ENCODE measurements at regions of chr6 and their contacts with region 1.

Region 1: GRCh38 chr6:83514866-83515466 is 2.6 kb downstream of the PRSS35 start:
- DNase-seq: peak; percentile 63
- H3K4me3 ChIP-seq: no peak overlapping the region
- H3K27ac ChIP-seq: no peak overlapping the region
- H3K27me3 ChIP-seq: no peaks in the 10 kb centered on the region
- CTCF ChIP-seq: peak; percentile 90

Region 2: GRCh38 chr6:83199863-83200225 is 315.1 kb before region 1 on chr6:
- CTCF ChIA-PET with region 1: interaction called, 10 read pairs
- POLR2A ChIA-PET with region 1: no interaction called
- DNase-seq: peak; percentile 47
- H3K4me3 ChIP-seq: no peak overlapping the region
- H3K27ac ChIP-seq: no peak overlapping the region
- H3K27me3 ChIP-seq: no peaks in the 10 kb centered on the region
- CTCF ChIP-seq: no peak

Region 3: GRCh38 chr6:83221889-83222479 is 293.0 kb before region 1 on chr6:
- CTCF ChIA-PET with region 1: interaction called, 320 read pairs
- POLR2A ChIA-PET with region 1: interaction called, 3 read pairs
- DNase-seq: no peak
- H3K4me3 ChIP-seq: no peak overlapping the region
- H3K27ac ChIP-seq: no peak overlapping the region
- H3K27me3 ChIP-seq: no peaks in the 10 kb centered on the region
- CTCF ChIP-seq: peak; percentile 57

Region 4: GRCh38 chr6:83352424-83353061 is 162.4 kb before region 1 on chr6:
- CTCF ChIA-PET with region 1: interaction called, 10 read pairs
- POLR2A ChIA-PET with region 1: interaction called, 10 read pairs
- DNase-seq: no peak
- H3K4me3 ChIP-seq: no peak overlapping the region
- H3K27ac ChIP-seq: no peak overlapping the region
- H3K27me3 ChIP-seq: no peaks in the 10 kb centered on the region
- CTCF ChIP-seq: no peak

Region 5: DNA sequence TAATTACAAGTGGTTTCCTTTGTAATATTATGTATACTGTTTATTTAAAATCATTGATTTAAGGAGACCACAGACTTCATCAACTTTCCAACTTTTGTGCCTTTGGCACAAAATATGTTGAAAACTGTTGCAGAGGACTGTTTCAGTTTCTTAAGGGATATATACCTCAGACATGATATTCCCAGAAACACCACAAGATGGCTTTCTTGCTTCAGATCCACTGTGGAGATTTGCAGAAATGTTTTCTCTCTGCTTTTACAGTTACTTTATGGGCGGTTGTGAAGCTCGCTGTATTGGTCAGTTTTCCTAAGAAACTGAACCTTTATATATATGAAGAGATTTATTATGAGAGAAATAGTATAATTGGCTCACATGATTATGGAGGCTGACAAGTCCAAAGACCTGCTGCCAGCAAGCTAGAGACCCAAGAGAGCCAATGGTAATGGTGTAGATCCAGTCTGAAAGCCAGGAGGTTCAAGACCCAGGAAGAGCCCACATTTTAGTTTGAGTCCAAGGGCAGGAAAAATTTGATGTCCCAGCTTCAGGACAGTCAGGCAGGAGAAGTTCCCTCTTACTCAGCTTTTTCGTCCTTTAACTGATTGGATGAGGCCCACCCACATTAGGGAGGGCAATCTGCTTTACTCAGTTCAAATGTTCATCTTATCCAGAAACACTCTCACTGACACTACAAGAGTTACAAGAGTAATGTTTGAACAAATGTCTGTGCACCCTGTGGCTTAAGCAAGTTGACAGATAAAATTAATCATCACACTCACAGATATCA is 96.9 kb before region 1 on chr6:
- CTCF ChIA-PET with region 1: interaction called, 259 read pairs
- POLR2A ChIA-PET with region 1: interaction called, 3 read pairs
- DNase-seq: peak; percentile 39
- H3K4me3 ChIP-seq: no peak overlapping the region
- H3K27ac ChIP-seq: no peak overlapping the region
- H3K27me3 ChIP-seq: no peaks in the 10 kb centered on the region
- CTCF ChIP-seq: peak; percentile 77

Region 6: GRCh38 chr6:83463886-83464285 is 51.1 kb before region 1 on chr6:
- CTCF ChIA-PET with region 1: interaction called, 17 read pairs
- POLR2A ChIA-PET with region 1: no interaction called
- DNase-seq: no peak
- H3K4me3 ChIP-seq: no peak overlapping the region
- H3K27ac ChIP-seq: no peak overlapping the region
- H3K27me3 ChIP-seq: no peaks in the 10 kb centered on the region
- CTCF ChIP-seq: no peak